ENCODE measurements at regions of chr16 and their contacts with region 1.

Region 1: GRCh38 chr16:75385507-75386152 is 47.7 kb downstream of the CFDP1 start:
- DNase-seq: no peak
- ATAC-seq: peak; percentile 60 to 64
- H3K4me3 ChIP-seq: no peak overlapping the region
- H3K27ac ChIP-seq: peak overlapping the region in 1 of 4 donors; percentile 11
- H3K4me1 ChIP-seq: peaks cover 3 to 4% of the 10 kb centered on the region in 2 donors
- H3K27me3 ChIP-seq: no peaks in the 10 kb centered on the region
- CTCF ChIP-seq: peak; percentile 73 to 94 (median 77)
- POLR2A ChIP-seq: no peak

Region 2: GRCh38 chr16:75305364-75306098 is 80.1 kb before region 1 on chr16:
- in situ Hi-C with region 1: loop called in 1 of 4 experiments (anchors 10 kb)
- intact Hi-C with region 1: loop called (anchors 5 kb)
- DNase-seq: peak; percentile 87 to 95
- ATAC-seq: peak; percentile 97 to 98
- H3K4me3 ChIP-seq: peak overlapping the region in 3 of 4 donors; percentile 4 to 21 (median 12)
- H3K27ac ChIP-seq: peak overlapping the region; percentile 86 to 91 (median 90)
- H3K4me1 ChIP-seq: peaks cover 26 to 27% of the 10 kb centered on the region in 2 donors
- H3K27me3 ChIP-seq: no peaks in the 10 kb centered on the region
- CTCF ChIP-seq: no peak
- POLR2A ChIP-seq: peak; percentile 61 to 73

Region 3: DNA sequence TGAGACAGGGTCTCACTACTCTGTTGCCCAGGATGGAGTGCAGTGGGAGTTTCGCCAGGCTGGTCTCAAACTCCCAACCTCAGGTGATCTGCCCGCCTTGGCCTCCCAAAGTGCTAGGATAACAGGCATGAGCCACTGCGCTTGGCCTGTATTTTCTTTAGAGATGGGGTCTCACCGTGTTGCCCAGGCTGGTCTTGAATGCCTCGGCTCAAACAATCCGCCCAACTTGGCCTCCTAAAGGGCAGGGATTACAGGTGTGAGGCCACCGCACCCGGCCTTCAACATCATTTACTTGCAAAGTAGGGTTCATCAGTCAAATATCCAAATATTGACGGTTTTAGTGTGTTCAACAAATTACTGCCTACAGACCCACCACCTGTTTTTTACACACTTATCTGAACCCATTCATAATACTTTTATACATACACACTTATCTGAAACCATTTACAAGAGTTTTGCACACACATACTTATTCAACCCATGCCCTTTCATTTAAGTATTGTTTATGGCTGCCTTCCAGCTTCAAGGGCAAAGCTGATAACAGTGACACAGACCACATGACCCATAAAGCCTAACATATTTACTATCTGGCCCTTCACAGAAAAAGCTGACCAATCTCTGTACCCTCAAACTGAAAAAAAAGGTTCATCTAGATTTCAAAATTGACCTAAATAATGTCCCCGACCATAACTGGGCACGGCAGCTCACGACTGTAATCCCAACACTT is 67.0 kb after region 1 on chr16:
- in situ Hi-C with region 1: no loop called
- intact Hi-C with region 1: no loop called
- DNase-seq: no peak
- ATAC-seq: no peak
- H3K4me3 ChIP-seq: no peak overlapping the region
- H3K27ac ChIP-seq: no peak overlapping the region
- H3K4me1 ChIP-seq: no peaks in the 10 kb centered on the region
- H3K27me3 ChIP-seq: no peaks in the 10 kb centered on the region
- CTCF ChIP-seq: no peak
- POLR2A ChIP-seq: no peak

Region 4: DNA sequence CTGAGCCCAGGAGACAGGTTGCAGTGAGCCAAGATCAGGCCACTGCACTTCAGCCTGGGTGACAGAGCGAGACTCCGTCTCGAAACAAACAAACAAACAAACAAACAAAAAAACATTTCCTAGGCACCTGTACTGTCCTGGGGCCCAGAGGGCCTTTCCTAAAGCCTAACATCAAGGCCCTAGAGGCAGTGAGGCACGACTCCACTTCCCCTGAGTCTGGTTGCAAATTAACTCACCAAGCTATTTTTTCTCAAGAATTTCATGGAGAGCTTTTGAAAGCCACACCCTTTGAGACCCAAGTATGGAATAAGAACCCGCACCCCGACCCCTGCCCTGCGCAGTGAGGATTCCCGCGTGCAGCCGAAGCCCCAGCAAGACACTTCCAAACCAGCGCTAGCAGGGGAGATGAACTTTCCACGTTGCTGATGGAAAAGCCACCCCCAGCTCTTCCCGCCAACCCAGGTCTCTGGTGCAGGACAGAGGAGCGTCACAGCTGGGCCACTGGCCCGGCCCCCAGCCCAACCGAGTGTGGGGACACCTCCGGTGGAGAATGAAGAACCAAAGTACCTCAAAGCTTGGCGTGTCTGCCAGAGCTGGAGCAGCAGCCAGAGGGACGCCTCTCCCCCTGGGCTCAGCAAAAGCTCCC is 149.1 kb after region 1 on chr16:
- in situ Hi-C with region 1: no loop called
- intact Hi-C with region 1: no loop called
- DNase-seq: no peak
- ATAC-seq: no peak
- H3K4me3 ChIP-seq: no peak overlapping the region
- H3K27ac ChIP-seq: no peak overlapping the region
- H3K4me1 ChIP-seq: no peaks in the 10 kb centered on the region
- H3K27me3 ChIP-seq: no peaks in the 10 kb centered on the region
- CTCF ChIP-seq: no peak
- POLR2A ChIP-seq: no peak

Region 5: DNA sequence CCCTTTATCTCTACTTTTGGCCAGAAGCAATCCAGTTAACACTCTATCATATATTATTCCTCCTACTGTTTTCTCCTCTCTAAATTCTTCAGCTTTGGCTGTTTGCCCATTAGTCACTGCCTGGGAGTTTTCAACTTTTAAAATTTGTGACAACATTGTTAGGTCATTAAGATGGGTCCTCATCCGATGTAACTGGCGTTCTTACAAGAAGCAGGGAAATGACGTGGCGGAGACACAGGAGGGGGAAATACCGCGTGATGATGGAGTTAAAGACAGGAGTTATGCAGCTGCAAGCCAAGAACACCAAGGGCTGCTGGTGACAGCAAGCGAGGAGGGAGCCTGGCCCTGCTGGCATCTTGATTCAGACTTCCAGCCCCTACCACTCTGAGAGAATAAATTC is 375.5 kb after region 1 on chr16:
- in situ Hi-C with region 1: no loop called
- intact Hi-C with region 1: no loop called
- DNase-seq: no peak
- ATAC-seq: no peak
- H3K4me3 ChIP-seq: no peak overlapping the region
- H3K27ac ChIP-seq: no peak overlapping the region
- H3K4me1 ChIP-seq: no peaks in the 10 kb centered on the region
- H3K27me3 ChIP-seq: no peaks in the 10 kb centered on the region
- CTCF ChIP-seq: no peak
- POLR2A ChIP-seq: no peak

Measured in gastrocnemius medialis (tissue), 4 donors.